ENCODE measurements at regions of chr15 and their contacts with region 1.

Region 1: DNA sequence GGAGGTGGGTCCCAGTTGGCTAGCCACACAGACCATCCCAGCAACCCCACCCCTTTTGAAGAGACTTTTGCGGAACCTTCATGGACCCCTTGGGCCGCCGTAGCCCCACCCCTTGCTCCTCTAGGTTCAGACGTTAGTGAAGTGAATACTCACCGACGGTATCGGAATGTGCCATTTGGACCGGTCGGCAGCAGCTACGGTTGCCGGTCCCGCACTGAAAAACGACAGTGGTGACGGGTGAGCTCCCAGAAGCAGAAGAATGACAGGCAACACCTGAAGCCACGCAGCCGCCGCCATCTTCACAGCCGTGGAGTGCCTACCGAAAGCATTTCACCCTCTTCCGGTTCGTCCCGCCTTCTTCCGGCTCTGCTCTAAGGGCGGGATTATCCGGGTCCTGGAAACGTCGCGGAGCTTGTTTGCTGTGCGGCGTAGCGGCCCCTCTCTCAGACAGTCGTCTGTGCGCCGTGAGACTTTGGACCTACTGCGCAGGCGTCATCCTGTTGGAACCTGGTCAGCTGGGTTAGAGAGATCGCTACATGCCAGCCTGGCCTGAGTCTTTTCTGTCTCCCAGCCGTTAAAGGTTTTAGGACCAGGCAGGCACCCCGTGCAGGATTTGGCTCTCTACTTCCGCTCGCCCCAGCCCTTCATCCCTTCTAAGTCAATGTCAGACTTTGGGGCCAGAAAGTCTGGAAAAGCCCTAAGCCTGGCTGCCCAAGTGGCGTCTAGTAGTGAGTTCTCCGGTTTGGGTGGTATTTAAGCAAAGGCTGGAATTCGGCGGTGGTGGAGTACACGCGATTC is at the starts of genes GANC and TMEM87A:
- H3K4me3 ChIP-seq: peak within 1 kb of the TSS; percentile 99
- H3K27ac ChIP-seq: peak within 1 kb of the TSS; percentile 81
- H3K4me1 ChIP-seq: no peaks in the 10 kb centered on the region
- CTCF ChIP-seq: no peak

Region 2: GRCh38 chr15:42306671-42307070 is 33.4 kb after region 1 on chr15:
- CTCF ChIA-PET with region 1: no interaction called
- POLR2A ChIA-PET with region 1: no interaction called
- H3K4me3 ChIP-seq: no peak overlapping the region
- H3K27ac ChIP-seq: no peak overlapping the region
- H3K4me1 ChIP-seq: no peaks in the 10 kb centered on the region
- CTCF ChIP-seq: no peak

Region 3: GRCh38 chr15:42444415-42445063 is 171.2 kb after region 1 on chr15:
- CTCF ChIA-PET with region 1: interaction called, 3 read pairs
- POLR2A ChIA-PET with region 1: interaction called, 10 read pairs
- H3K4me3 ChIP-seq: no peak overlapping the region
- H3K27ac ChIP-seq: no peak overlapping the region
- H3K4me1 ChIP-seq: no peaks in the 10 kb centered on the region
- CTCF ChIP-seq: no peak

Measured in HEK293 (cell line).